Left ventricle myocardium superior (tissue), 1 donor: ENCODE measurements at regions of chr5 and their contacts with region 1.

Region 1: GRCh38 chr5:90932052-90932699 is 373.6 kb downstream of the ADGRV1 start:
- DNase-seq: no peak
- ATAC-seq: peak; percentile 58

Region 2: GRCh38 chr5:90308787-90309553 is 623.2 kb before region 1 on chr5:
- intact Hi-C with region 1: no loop called
- DNase-seq: no peak
- ATAC-seq: no peak

Region 3: GRCh38 chr5:90866333-90866732 is 65.8 kb before region 1 on chr5:
- intact Hi-C with region 1: loop called (anchors 10 kb)
- DNase-seq: no peak
- ATAC-seq: peak; percentile 54

Region 4: GRCh38 chr5:91397791-91398190 is 465.6 kb after region 1 on chr5:
- intact Hi-C with region 1: loop called (anchors 10 kb)
- DNase-seq: no peak
- ATAC-seq: no peak

Region 5: GRCh38 chr5:91419571-91420537 is 487.7 kb after region 1 on chr5:
- intact Hi-C with region 1: loop called (anchors 2 kb)
- DNase-seq: peak; percentile 47
- ATAC-seq: no peak